Activated CD4-positive, alpha-beta T cell treated with anti-CD3 and anti-CD28 coated beads for 36 hours (primary cell): ENCODE measurements at regions of chr12 and their contacts with region 1.

Region 1: GRCh38 chr12:120725659-120726509 is at the start of gene ACADS:
- DNase-seq: peak; percentile 96
- ATAC-seq: peak; percentile 100
- H3K4me3 Mint-ChIP-seq: peak within 1 kb of the TSS; percentile 78
- H3K27ac Mint-ChIP-seq: peak within 1 kb of the TSS; percentile 64
- H3K4me1 Mint-ChIP-seq: peaks cover 17% of the 10 kb centered on the region
- H3K27me3 Mint-ChIP-seq: no peaks in the 10 kb centered on the region
- total RNA-seq, gene ACADS: 10.1 to 17.4 TPM

Region 2: GRCh38 chr12:120710031-120710804 is 15.7 kb before region 1 on chr12 and contains the start of gene UNC119B:
- CTCF ChIA-PET with region 1: interaction called, 3 read pairs
- POLR2A ChIA-PET with region 1: no interaction called
- intact Hi-C with region 1: loop called in 1 of 2 experiments (anchors 1 kb)
- DNase-seq: peak; percentile 83
- ATAC-seq: peak; percentile 78
- H3K4me3 Mint-ChIP-seq: peak within 1 kb of the TSS; percentile 86
- H3K27ac Mint-ChIP-seq: peak within 1 kb of the TSS; percentile 82
- H3K4me1 Mint-ChIP-seq: peaks cover 34% of the 10 kb centered on the region
- H3K27me3 Mint-ChIP-seq: no peaks in the 10 kb centered on the region
- total RNA-seq, gene UNC119B: 20.1 to 26.6 TPM

Region 3: GRCh38 chr12:120904197-120904773 is 178.4 kb after region 1 on chr12 and contains the start of gene SPPL3:
- CTCF ChIA-PET with region 1: no interaction called
- POLR2A ChIA-PET with region 1: no interaction called
- intact Hi-C with region 1: loop called in 1 of 2 experiments (anchors 1 kb)
- DNase-seq: peak; percentile 96
- ATAC-seq: peak; percentile 81
- H3K4me3 Mint-ChIP-seq: peak within 1 kb of the TSS; percentile 92
- H3K27ac Mint-ChIP-seq: peak within 1 kb of the TSS; percentile 95
- H3K4me1 Mint-ChIP-seq: peaks cover 28% of the 10 kb centered on the region
- H3K27me3 Mint-ChIP-seq: no peaks in the 10 kb centered on the region
- total RNA-seq, gene SPPL3: 29.5 to 48.2 TPM